GM12878 (cell line): ENCODE measurements at regions of chr4 and their contacts with region 1.

Region 1: GRCh38 chr4:111854494-111855087 is 290.7 kb upstream of the FAM241A start:
- DNase-seq: no peak
- ATAC-seq: peak; percentile 83
- H3K4me3 ChIP-seq: no peak overlapping the region
- H3K27ac ChIP-seq: no peak overlapping the region
- H3K4me1 ChIP-seq: no peaks in the 10 kb centered on the region
- H3K27me3 ChIP-seq: no peaks in the 10 kb centered on the region
- CTCF ChIP-seq: peak; percentile 52 to 65 (median 60); a peak in 5 of 6 replicates
- EP300 ChIP-seq: no peak
- POLR2A ChIP-seq: no peak
- RAD21 ChIP-seq: peak; percentile 74

Region 2: GRCh38 chr4:111641955-111642579 is 212.5 kb before region 1 on chr4:
- CTCF ChIA-PET with region 1: interaction called, 28 read pairs
- POLR2A ChIA-PET with region 1: no interaction called
- RAD21 ChIA-PET with region 1: interaction called, 8 read pairs
- SMC1A ChIA-PET with region 1: interaction called, 14 read pairs
- in situ Hi-C with region 1: no loop called
- intact Hi-C with region 1: loop called (anchors 2 kb)
- DNase-seq: peak; percentile 13
- ATAC-seq: peak; percentile 98
- H3K4me3 ChIP-seq: no peak overlapping the region
- H3K27ac ChIP-seq: no peak overlapping the region
- H3K4me1 ChIP-seq: no peaks in the 10 kb centered on the region
- H3K27me3 ChIP-seq: no peaks in the 10 kb centered on the region; a peak in 1 of 4 replicates
- CTCF ChIP-seq: peak; percentile 80 to 97 (median 83)
- EP300 ChIP-seq: no peak
- POLR2A ChIP-seq: no peak
- RAD21 ChIP-seq: peak; percentile 74

Region 3: GRCh38 chr4:111838406-111838930 is 16.1 kb before region 1 on chr4:
- CTCF ChIA-PET with region 1: interaction called, 53 read pairs
- POLR2A ChIA-PET with region 1: no interaction called
- RAD21 ChIA-PET with region 1: interaction called, 10 read pairs
- SMC1A ChIA-PET with region 1: interaction called, 6 read pairs
- in situ Hi-C with region 1: no loop called
- intact Hi-C with region 1: no loop called
- DNase-seq: no peak
- ATAC-seq: peak; percentile 82
- H3K4me3 ChIP-seq: no peak overlapping the region
- H3K27ac ChIP-seq: no peak overlapping the region
- H3K4me1 ChIP-seq: no peaks in the 10 kb centered on the region
- H3K27me3 ChIP-seq: no peaks in the 10 kb centered on the region
- CTCF ChIP-seq: no peak
- EP300 ChIP-seq: no peak
- POLR2A ChIP-seq: no peak
- RAD21 ChIP-seq: no peak

Region 4: GRCh38 chr4:111871802-111872201 is 17.2 kb after region 1 on chr4:
- CTCF ChIA-PET with region 1: interaction called, 17 read pairs
- POLR2A ChIA-PET with region 1: no interaction called
- RAD21 ChIA-PET with region 1: interaction called, 4 read pairs
- SMC1A ChIA-PET with region 1: interaction called, 5 read pairs
- in situ Hi-C with region 1: no loop called
- intact Hi-C with region 1: no loop called
- DNase-seq: no peak
- ATAC-seq: no peak
- H3K4me3 ChIP-seq: no peak overlapping the region
- H3K27ac ChIP-seq: no peak overlapping the region
- H3K4me1 ChIP-seq: no peaks in the 10 kb centered on the region
- H3K27me3 ChIP-seq: no peaks in the 10 kb centered on the region; a peak in 1 of 4 replicates
- CTCF ChIP-seq: no peak
- EP300 ChIP-seq: no peak
- POLR2A ChIP-seq: no peak
- RAD21 ChIP-seq: no peak

Region 5: GRCh38 chr4:111879539-111879938 is 24.9 kb after region 1 on chr4:
- CTCF ChIA-PET with region 1: interaction called, 17 read pairs
- POLR2A ChIA-PET with region 1: no interaction called
- RAD21 ChIA-PET with region 1: no interaction called
- SMC1A ChIA-PET with region 1: interaction called, 4 read pairs
- in situ Hi-C with region 1: no loop called
- intact Hi-C with region 1: no loop called
- DNase-seq: peak; percentile 5
- ATAC-seq: peak; percentile 67
- H3K4me3 ChIP-seq: no peak overlapping the region
- H3K27ac ChIP-seq: no peak overlapping the region
- H3K4me1 ChIP-seq: no peaks in the 10 kb centered on the region
- H3K27me3 ChIP-seq: no peaks in the 10 kb centered on the region
- CTCF ChIP-seq: no peak
- EP300 ChIP-seq: no peak
- POLR2A ChIP-seq: no peak
- RAD21 ChIP-seq: no peak

Region 6: DNA sequence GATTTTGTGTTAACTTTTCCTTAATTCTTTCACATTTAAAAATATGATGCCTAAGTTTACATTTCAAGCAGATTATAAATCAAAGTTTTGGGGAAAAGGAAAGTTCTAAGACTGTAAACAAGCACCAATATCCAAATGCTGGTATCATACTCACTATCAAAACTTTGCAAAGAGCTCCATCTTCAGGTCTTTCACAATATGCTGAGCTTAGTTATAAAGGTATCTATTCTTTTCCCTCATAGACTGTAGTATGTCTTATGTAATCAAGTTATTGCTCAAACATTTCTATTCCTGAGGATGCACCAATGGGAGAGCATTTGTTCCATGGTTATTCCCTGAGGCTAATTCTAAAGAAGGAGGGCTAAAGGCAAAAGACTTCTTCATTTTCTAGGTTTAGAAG is 82.8 kb after region 1 on chr4:
- CTCF ChIA-PET with region 1: interaction called, 55 read pairs
- POLR2A ChIA-PET with region 1: no interaction called
- RAD21 ChIA-PET with region 1: interaction called, 14 read pairs
- SMC1A ChIA-PET with region 1: interaction called, 16 read pairs
- in situ Hi-C with region 1: no loop called
- intact Hi-C with region 1: loop called (anchors 2 kb)
- DNase-seq: no peak
- ATAC-seq: peak; percentile 96
- H3K4me3 ChIP-seq: no peak overlapping the region
- H3K27ac ChIP-seq: no peak overlapping the region
- H3K4me1 ChIP-seq: no peaks in the 10 kb centered on the region
- H3K27me3 ChIP-seq: no peaks in the 10 kb centered on the region; a peak in 1 of 4 replicates
- CTCF ChIP-seq: peak; percentile 43 to 65 (median 49)
- EP300 ChIP-seq: no peak
- POLR2A ChIP-seq: no peak
- RAD21 ChIP-seq: peak; percentile 60

Region 7: DNA sequence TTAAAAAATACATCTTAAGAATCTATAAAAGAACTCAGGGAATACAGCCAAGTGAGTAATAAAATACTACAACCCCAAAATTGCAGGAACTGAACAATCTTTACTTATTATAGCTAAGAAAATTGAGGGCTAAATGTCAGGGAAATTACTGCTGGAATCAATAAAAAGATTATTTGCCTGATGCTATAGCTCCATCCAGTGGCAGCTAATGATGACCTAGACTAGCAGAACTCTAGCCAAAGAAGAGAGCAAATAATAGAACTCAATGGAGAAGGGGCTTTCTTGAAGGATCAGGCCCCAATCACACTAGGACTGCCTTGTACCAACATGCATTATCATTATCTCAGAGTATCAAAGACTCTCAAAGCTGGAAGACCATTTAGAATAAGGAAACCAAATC is 205.6 kb after region 1 on chr4:
- CTCF ChIA-PET with region 1: interaction called, 10 read pairs
- POLR2A ChIA-PET with region 1: no interaction called
- RAD21 ChIA-PET with region 1: interaction called, 9 read pairs
- SMC1A ChIA-PET with region 1: interaction called, 4 read pairs
- in situ Hi-C with region 1: no loop called
- intact Hi-C with region 1: no loop called
- DNase-seq: no peak
- ATAC-seq: peak; percentile 77
- H3K4me3 ChIP-seq: no peak overlapping the region
- H3K27ac ChIP-seq: no peak overlapping the region
- H3K4me1 ChIP-seq: no peaks in the 10 kb centered on the region
- H3K27me3 ChIP-seq: no peaks in the 10 kb centered on the region
- CTCF ChIP-seq: peak; percentile 49 to 67 (median 54); a peak in 5 of 6 replicates
- EP300 ChIP-seq: no peak
- POLR2A ChIP-seq: no peak
- RAD21 ChIP-seq: peak; percentile 66